ENCODE measurements at regions of chr3 and their contacts with region 1.

Region 1: GRCh38 chr3:128497387-128498126 is 4.6 kb upstream of the GATA2 start:
- DNase-seq: peak; percentile 62 to 85 (median 72)
- ATAC-seq: peak; percentile 34 to 83 (median 74)
- H3K4me3 ChIP-seq: peak overlapping the region; percentile 25 to 66 (median 56)
- H3K27ac ChIP-seq: peak overlapping the region in 3 of 12 donors; percentile 0 to 51 (median 29)
- H3K4me1 ChIP-seq: peaks cover 8 to 29% (median 17%) of the 10 kb centered on the region in 12 donors
- H3K27me3 ChIP-seq: peaks cover 3 to 74% (median 28%) of the 10 kb centered on the region in 9 donors
- CTCF ChIP-seq: peak; percentile 44 to 93 (median 72)
- POLR2A ChIP-seq: no peak

Region 2: GRCh38 chr3:128095222-128095703 is 402.3 kb before region 1 on chr3:
- intact Hi-C with region 1: loop called in 9 of 10 experiments (anchors 2 to 10 kb)
- DNase-seq: peak; percentile 80 to 90 (median 81)
- ATAC-seq: peak; percentile 97 to 98 (median 97)
- H3K4me3 ChIP-seq: no peak overlapping the region
- H3K27ac ChIP-seq: peak overlapping the region in 1 of 12 donors; percentile 37
- H3K4me1 ChIP-seq: peaks cover 0 to 14% (median 1%) of the 10 kb centered on the region in 12 donors
- H3K27me3 ChIP-seq: no peaks in the 10 kb centered on the region
- CTCF ChIP-seq: peak; percentile 67 to 92 (median 84)
- POLR2A ChIP-seq: no peak

Region 3: GRCh38 chr3:128226795-128227395 is 270.7 kb before region 1 on chr3:
- intact Hi-C with region 1: loop called in 1 of 10 experiments (anchors 5 kb)
- DNase-seq: no peak
- ATAC-seq: peak; percentile 58 to 78 (median 66)
- H3K4me3 ChIP-seq: no peak overlapping the region
- H3K27ac ChIP-seq: no peak overlapping the region
- H3K4me1 ChIP-seq: peaks cover 0 to 23% (median 8%) of the 10 kb centered on the region in 12 donors
- H3K27me3 ChIP-seq: no peaks in the 10 kb centered on the region
- CTCF ChIP-seq: peak; percentile 44 to 78 (median 64)
- POLR2A ChIP-seq: no peak

Region 4: DNA sequence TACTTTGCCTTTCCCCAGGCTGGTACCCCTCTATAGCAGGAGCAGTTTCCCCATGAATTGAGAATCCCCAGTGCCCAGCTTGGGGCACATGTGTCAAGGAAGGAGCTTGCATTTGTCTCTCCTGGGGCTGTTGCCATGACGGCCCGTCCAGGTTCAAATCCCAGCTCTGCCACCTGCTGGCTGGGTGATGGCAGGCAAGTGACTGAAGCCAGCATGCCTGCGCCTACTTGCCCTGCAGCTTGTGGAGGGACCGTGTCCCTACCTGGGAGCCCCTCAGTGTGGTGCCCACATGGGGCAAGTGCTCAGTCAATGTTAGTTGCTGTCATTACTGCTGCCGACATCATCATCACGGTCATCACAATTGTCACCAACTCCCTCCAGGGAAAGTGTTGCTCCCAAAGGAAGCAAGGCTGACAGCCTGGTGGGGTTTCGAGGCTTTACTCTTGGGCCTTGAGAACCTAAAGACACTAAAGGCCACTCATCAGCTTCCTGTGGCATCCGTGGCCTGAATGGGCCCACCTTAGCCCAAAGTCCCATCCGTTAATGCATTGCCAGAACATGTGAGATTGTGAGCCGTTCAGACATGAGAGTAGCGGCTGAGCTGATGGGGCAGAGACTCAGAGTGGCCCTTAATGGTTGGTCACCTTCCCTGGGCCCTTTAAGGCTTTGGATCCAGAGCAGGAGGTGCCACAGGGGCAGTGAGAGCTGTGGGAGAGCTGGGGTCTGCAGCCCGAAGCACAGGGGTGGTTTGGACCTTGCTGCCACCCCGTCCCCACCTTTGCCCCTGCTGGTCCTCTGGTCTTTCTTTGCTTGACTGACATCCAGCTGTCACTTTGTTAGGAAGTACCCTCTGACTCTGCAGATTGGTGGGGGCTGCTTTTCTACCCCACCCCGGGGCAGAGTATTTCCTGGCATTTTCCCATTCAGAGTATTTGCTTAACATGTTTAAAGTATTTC is 175.2 kb before region 1 on chr3:
- intact Hi-C with region 1: loop called in 1 of 10 experiments (anchors 10 kb)
- DNase-seq: peak; percentile 41 to 80 (median 49)
- ATAC-seq: peak; percentile 45 to 72 (median 56)
- H3K4me3 ChIP-seq: no peak overlapping the region
- H3K27ac ChIP-seq: no peak overlapping the region
- H3K4me1 ChIP-seq: peaks cover 0 to 14% (median 0%) of the 10 kb centered on the region in 12 donors
- H3K27me3 ChIP-seq: no peaks in the 10 kb centered on the region
- CTCF ChIP-seq: peak; percentile 34 to 72 (median 56)
- POLR2A ChIP-seq: no peak

Region 5: DNA sequence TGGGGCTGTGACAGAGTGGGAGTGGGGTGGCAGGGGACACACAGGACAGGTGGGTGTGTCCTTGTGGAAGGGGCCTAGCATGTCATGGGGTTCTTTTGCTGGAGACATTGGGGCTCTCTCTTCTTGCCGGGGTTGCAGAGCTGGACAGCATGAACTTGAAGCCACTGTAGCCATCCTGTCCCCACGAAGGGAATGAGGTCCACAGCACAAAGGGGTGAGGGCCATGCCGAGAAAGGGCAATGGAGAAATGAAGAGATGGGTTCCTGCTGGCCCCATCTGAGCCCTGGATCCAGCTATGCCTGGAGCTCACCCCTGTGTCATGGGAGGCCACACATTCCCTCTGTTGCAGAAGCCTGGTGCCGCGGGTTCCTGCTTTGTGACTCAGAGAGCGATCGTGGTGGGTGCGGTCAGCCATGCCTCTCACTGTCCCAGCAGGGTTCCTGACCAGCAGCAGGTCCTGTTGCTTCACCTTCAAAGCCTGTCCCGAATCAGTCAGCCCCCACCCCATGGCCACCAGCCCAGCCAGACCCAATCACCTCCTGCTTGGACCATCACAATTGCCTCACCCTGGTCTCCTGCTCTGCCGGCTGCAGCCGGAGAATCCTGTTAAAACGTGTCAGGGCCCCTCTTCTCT is 80.9 kb before region 1 on chr3:
- intact Hi-C with region 1: no loop called
- DNase-seq: no peak
- ATAC-seq: no peak
- H3K4me3 ChIP-seq: no peak overlapping the region
- H3K27ac ChIP-seq: no peak overlapping the region
- H3K4me1 ChIP-seq: no peaks in the 10 kb centered on the region
- H3K27me3 ChIP-seq: no peaks in the 10 kb centered on the region
- CTCF ChIP-seq: no peak
- POLR2A ChIP-seq: no peak

Region 6: GRCh38 chr3:128464188-128464587 is 33.4 kb before region 1 on chr3:
- intact Hi-C with region 1: loop called in 1 of 10 experiments (anchors 1 kb)
- DNase-seq: no peak
- ATAC-seq: peak in 1 of 4 donors; percentile 53
- H3K4me3 ChIP-seq: no peak overlapping the region
- H3K27ac ChIP-seq: no peak overlapping the region
- H3K4me1 ChIP-seq: no peaks in the 10 kb centered on the region
- H3K27me3 ChIP-seq: peaks cover 0 to 20% (median 0%) of the 10 kb centered on the region in 9 donors
- CTCF ChIP-seq: peak; percentile 27 to 60 (median 38)
- POLR2A ChIP-seq: no peak

Region 7: GRCh38 chr3:128603811-128604775 is 106.5 kb after region 1 on chr3:
- intact Hi-C with region 1: loop called in 2 of 10 experiments (anchors 5 kb)
- DNase-seq: no peak
- ATAC-seq: no peak
- H3K4me3 ChIP-seq: no peak overlapping the region
- H3K27ac ChIP-seq: no peak overlapping the region
- H3K4me1 ChIP-seq: peaks cover 0 to 15% (median 7%) of the 10 kb centered on the region in 12 donors
- H3K27me3 ChIP-seq: no peaks in the 10 kb centered on the region
- CTCF ChIP-seq: no peak
- POLR2A ChIP-seq: no peak

Region 8: GRCh38 chr3:128665362-128666038 is 167.9 kb after region 1 on chr3:
- intact Hi-C with region 1: no loop called
- DNase-seq: no peak
- ATAC-seq: no peak
- H3K4me3 ChIP-seq: no peak overlapping the region
- H3K27ac ChIP-seq: no peak overlapping the region
- H3K4me1 ChIP-seq: no peaks in the 10 kb centered on the region
- H3K27me3 ChIP-seq: no peaks in the 10 kb centered on the region
- CTCF ChIP-seq: peak in 2 of 12 donors; percentile 12 to 31
- POLR2A ChIP-seq: no peak

Region 9: GRCh38 chr3:128698211-128699064 is 200.9 kb after region 1 on chr3:
- intact Hi-C with region 1: no loop called
- DNase-seq: peak; percentile 37 to 77 (median 50)
- ATAC-seq: peak; percentile 71 to 88 (median 88)
- H3K4me3 ChIP-seq: peak overlapping the region; percentile 34 to 82 (median 64)
- H3K27ac ChIP-seq: peak overlapping the region in 11 of 12 donors; percentile 66 to 85 (median 78)
- H3K4me1 ChIP-seq: peaks cover 0 to 23% (median 0%) of the 10 kb centered on the region in 12 donors
- H3K27me3 ChIP-seq: no peaks in the 10 kb centered on the region
- CTCF ChIP-seq: no peak
- POLR2A ChIP-seq: no peak

Measured in heart left ventricle (tissue), 16 donors.